ENCODE measurements at regions of chr4 and their contacts with region 1.

Region 1: DNA sequence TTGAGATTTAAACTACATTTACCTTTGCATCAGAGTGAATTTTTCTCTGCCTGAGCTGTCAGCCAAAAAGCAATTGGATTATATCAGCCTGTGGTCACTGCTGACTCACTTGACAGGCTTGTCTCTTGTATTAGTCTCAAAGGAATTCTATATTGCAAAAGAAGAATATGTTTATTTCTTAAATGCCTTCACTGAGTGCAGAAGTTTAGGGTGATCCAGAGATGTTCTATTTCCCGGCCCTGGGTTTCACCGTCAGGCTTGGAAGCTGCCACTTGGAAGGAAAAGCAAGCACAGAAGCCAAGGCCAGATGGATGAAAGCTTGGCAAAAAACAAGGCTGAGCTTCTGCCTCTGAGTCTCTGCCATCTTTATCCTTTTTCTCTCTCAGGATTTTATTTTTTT is 80.9 kb downstream of the FAM114A1 start:
- DNase-seq: peak; percentile 94
- H3K4me3 ChIP-seq: no peak overlapping the region
- H3K27ac ChIP-seq: peak overlapping the region; percentile 80 to 89 (median 87)
- H3K4me1 ChIP-seq: peaks cover 0 to 79% (median 58%) of the 10 kb centered on the region in 4 donors
- H3K27me3 ChIP-seq: no peaks in the 10 kb centered on the region
- CTCF ChIP-seq: no peak
- EP300 ChIP-seq: peak; percentile 55 to 93 (median 88)
- POLR2A ChIP-seq: no peak

Region 2: GRCh38 chr4:38867478-38868058 is 81.0 kb before region 1 on chr4 and contains the start of gene FAM114A1:
- intact Hi-C with region 1: loop called (anchors 5 kb)
- DNase-seq: peak; percentile 91
- H3K4me3 ChIP-seq: peak within 1 kb of the TSS; percentile 77 to 94 (median 90)
- H3K27ac ChIP-seq: peak within 1 kb of the TSS; percentile 92 to 99 (median 97)
- H3K4me1 ChIP-seq: peaks cover 0 to 51% (median 43%) of the 10 kb centered on the region in 4 donors
- H3K27me3 ChIP-seq: no peaks in the 10 kb centered on the region
- CTCF ChIP-seq: no peak
- EP300 ChIP-seq: no peak
- POLR2A ChIP-seq: peak; percentile 31 to 71
- total RNA-seq, gene FAM114A1: 120 to 189 (median 134) TPM

Region 3: GRCh38 chr4:39495454-39496213 is 547.1 kb after region 1 on chr4:
- intact Hi-C with region 1: no loop called
- DNase-seq: no peak
- H3K4me3 ChIP-seq: no peak overlapping the region
- H3K27ac ChIP-seq: no peak overlapping the region
- H3K4me1 ChIP-seq: no peaks in the 10 kb centered on the region
- H3K27me3 ChIP-seq: no peaks in the 10 kb centered on the region
- CTCF ChIP-seq: no peak
- EP300 ChIP-seq: no peak
- POLR2A ChIP-seq: no peak